Activated naive CD4-positive, alpha-beta T cell treated with anti-CD3 and anti-CD28 coated beads for 36 hours (primary cell): ENCODE measurements at regions of chr3 and their contacts with region 1.

Region 1: GRCh38 chr3:177359593-177360357 is 162.5 kb upstream of the TBL1XR1 start:
- DNase-seq: peak; percentile 95
- H3K4me3 Mint-ChIP-seq: peak overlapping the region; percentile 72
- H3K27ac Mint-ChIP-seq: peak overlapping the region; percentile 94
- H3K4me1 Mint-ChIP-seq: peaks cover 54% of the 10 kb centered on the region
- H3K27me3 Mint-ChIP-seq: no peaks in the 10 kb centered on the region

Region 2: GRCh38 chr3:177057768-177058167 is 302.0 kb before region 1 on chr3:
- CTCF ChIA-PET with region 1: no interaction called
- intact Hi-C with region 1: loop called (anchors 1 kb)
- DNase-seq: peak; percentile 84
- H3K4me3 Mint-ChIP-seq: no peak overlapping the region
- H3K27ac Mint-ChIP-seq: no peak overlapping the region
- H3K4me1 Mint-ChIP-seq: peaks cover 32% of the 10 kb centered on the region
- H3K27me3 Mint-ChIP-seq: no peaks in the 10 kb centered on the region

Region 3: DNA sequence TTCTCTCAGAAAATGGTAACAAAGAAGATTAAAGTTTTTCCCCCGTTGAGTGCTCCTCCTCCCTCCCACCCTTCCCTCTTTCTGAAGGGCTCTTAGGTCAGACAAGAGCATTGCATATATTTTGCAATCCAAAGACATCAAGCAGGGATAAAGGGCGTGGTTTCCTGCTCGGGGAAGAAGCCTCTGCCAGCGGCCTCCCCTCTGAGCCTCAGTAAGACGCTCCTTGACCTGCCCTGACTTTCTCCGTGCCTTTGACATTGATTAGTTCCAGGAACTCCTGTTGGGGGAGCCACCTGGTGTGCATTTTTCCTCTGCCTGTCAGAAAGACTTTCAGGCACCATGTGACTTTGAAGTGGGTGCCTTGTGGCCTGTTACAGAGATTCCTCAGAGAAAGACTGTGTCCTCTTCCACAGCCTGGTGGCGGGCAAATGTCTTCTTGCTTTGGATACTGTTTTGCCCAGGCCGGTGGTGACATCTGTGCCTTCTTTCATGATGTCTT is 75.3 kb before region 1 on chr3:
- CTCF ChIA-PET with region 1: no interaction called
- intact Hi-C with region 1: loop called (anchors 1 kb)
- DNase-seq: peak; percentile 62
- H3K4me3 Mint-ChIP-seq: no peak overlapping the region
- H3K27ac Mint-ChIP-seq: no peak overlapping the region
- H3K4me1 Mint-ChIP-seq: peaks cover 25% of the 10 kb centered on the region
- H3K27me3 Mint-ChIP-seq: no peaks in the 10 kb centered on the region

Region 4: GRCh38 chr3:177337541-177338331 is 22.0 kb before region 1 on chr3:
- CTCF ChIA-PET with region 1: no interaction called
- intact Hi-C with region 1: loop called (anchors 1 kb)
- DNase-seq: peak; percentile 91
- H3K4me3 Mint-ChIP-seq: no peak overlapping the region
- H3K27ac Mint-ChIP-seq: peak overlapping the region; percentile 42
- H3K4me1 Mint-ChIP-seq: peaks cover 36% of the 10 kb centered on the region
- H3K27me3 Mint-ChIP-seq: peaks cover 5% of the 10 kb centered on the region

Region 5: GRCh38 chr3:177419904-177420601 is 60.3 kb after region 1 on chr3:
- CTCF ChIA-PET with region 1: no interaction called
- intact Hi-C with region 1: loop called (anchors 1 kb)
- DNase-seq: peak; percentile 53
- H3K4me3 Mint-ChIP-seq: no peak overlapping the region
- H3K27ac Mint-ChIP-seq: peak overlapping the region; percentile 86
- H3K4me1 Mint-ChIP-seq: peaks cover 27% of the 10 kb centered on the region
- H3K27me3 Mint-ChIP-seq: peaks cover 2% of the 10 kb centered on the region

Region 6: DNA sequence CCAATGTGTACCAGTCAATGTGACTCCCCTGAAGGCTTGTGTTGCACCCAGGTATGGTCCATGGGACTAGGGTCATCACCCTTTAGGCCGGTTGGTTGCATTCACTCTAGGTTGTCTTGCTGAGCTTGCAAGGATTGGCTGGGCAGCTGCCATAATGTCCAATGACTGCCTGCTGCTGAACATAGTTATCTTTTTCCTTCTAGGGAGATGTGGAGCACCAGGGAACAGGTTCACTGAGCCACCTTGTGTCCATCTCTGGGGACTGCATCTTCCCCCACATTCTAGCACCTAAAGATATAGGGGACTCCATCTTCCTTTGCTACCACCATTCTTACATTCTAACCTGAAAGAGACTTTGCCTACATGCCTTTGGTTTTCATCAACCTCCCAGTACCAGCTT is 417.9 kb after region 1 on chr3:
- CTCF ChIA-PET with region 1: no interaction called
- intact Hi-C with region 1: loop called (anchors 2 kb)
- DNase-seq: peak; percentile 72
- H3K4me3 Mint-ChIP-seq: no peak overlapping the region
- H3K27ac Mint-ChIP-seq: no peak overlapping the region
- H3K4me1 Mint-ChIP-seq: peaks cover 11% of the 10 kb centered on the region
- H3K27me3 Mint-ChIP-seq: no peaks in the 10 kb centered on the region